CD8-positive, alpha-beta T cell (primary cell): ENCODE measurements at regions of chr5 and their contacts with region 1.

Region 1: DNA sequence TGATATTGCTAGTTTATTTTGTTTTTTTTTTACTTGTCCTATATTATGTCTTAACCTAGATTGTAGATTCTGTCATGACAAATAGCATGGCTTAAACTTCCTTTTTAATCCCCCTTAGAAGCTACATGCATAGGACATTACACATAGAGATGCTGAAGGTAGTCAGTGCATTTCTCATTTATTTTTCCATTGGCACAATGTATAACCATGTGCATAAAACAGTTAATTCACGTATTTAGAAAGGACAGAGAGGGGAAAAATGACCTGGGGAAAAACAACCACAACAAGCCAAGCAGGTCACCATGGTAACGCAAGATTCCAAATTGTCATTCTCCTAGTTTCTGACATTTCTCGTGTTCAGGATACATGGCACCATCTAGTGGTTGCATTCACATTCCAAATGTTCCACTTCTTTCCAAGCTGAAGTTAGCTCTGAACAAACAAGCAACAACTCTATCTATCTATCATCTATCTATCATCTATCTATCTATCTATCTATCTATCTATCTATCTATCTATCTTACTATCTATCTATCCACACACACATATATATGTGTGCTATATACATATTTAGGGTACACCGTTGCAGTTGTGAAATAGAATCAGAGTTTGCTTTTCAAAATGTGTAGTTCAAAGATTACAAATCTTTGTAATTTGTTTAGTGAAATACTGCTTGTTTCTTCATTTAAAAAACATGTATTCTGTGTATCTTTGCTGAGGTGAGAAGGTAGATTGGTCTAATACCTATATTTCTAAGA is 487.2 kb upstream of the ST8SIA4 start:
- DNase-seq: peak in 2 of 9 experiments; percentile 22 to 33
- ATAC-seq: no peak
- H3K4me3 ChIP-seq: no peak overlapping the region
- H3K4me3 Mint-ChIP-seq: no peak overlapping the region
- H3K27ac ChIP-seq: no peak overlapping the region
- H3K27ac Mint-ChIP-seq: no peak overlapping the region
- H3K4me1 ChIP-seq: no peaks in the 10 kb centered on the region
- H3K4me1 Mint-ChIP-seq: no peaks in the 10 kb centered on the region
- H3K27me3 ChIP-seq: no peaks in the 10 kb centered on the region
- H3K27me3 Mint-ChIP-seq: no peaks in the 10 kb centered on the region
- CTCF ChIP-seq: peak; percentile 36

Region 2: DNA sequence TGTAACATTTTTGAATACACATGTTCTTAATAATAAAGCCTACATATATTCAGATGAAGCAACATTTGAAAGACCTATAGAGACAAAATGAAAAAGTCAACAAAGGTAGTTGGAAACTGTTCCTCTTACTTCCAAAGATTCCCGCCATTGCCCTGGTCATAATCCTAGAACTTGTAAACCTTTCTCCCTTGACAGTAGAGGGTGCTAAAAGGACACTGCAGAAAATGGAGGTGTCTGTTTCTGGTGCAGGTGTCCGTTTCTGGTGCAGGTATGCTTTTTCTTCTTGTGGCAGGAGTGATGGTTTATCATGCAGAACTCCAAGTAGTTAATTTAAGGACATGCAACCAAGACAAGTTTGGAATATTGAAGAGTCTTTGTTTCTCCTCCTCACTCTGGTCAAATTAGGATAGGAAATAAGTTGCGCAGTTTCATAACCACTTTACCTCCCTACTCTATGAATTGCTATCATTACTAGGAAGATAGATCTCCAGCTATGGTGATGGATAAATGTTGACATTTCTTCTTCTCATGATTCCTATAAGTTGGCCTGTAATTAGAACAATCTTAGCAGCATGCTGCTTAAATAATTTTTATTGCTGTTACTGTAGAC is 911.1 kb before region 1 on chr5:
- CTCF ChIA-PET with region 1: no interaction called
- POLR2A ChIA-PET with region 1: no interaction called
- intact Hi-C with region 1: loop called (anchors 1 to 5 kb)
- DNase-seq: peak in 2 of 9 experiments; percentile 32 to 47
- ATAC-seq: no peak
- H3K4me3 ChIP-seq: no peak overlapping the region
- H3K4me3 Mint-ChIP-seq: no peak overlapping the region
- H3K27ac ChIP-seq: no peak overlapping the region
- H3K27ac Mint-ChIP-seq: no peak overlapping the region
- H3K4me1 ChIP-seq: no peaks in the 10 kb centered on the region
- H3K4me1 Mint-ChIP-seq: no peaks in the 10 kb centered on the region
- H3K27me3 ChIP-seq: no peaks in the 10 kb centered on the region
- H3K27me3 Mint-ChIP-seq: no peaks in the 10 kb centered on the region
- CTCF ChIP-seq: peak; percentile 32

Region 3: GRCh38 chr5:101440173-101440572 is 49.8 kb after region 1 on chr5:
- CTCF ChIA-PET with region 1: no interaction called
- POLR2A ChIA-PET with region 1: no interaction called
- intact Hi-C with region 1: loop called in 1 of 2 experiments (anchors 2 kb)
- DNase-seq: no peak
- ATAC-seq: no peak
- H3K4me3 ChIP-seq: no peak overlapping the region
- H3K4me3 Mint-ChIP-seq: no peak overlapping the region
- H3K27ac ChIP-seq: no peak overlapping the region
- H3K27ac Mint-ChIP-seq: no peak overlapping the region
- H3K4me1 ChIP-seq: no peaks in the 10 kb centered on the region
- H3K4me1 Mint-ChIP-seq: no peaks in the 10 kb centered on the region
- H3K27me3 ChIP-seq: no peaks in the 10 kb centered on the region
- H3K27me3 Mint-ChIP-seq: no peaks in the 10 kb centered on the region
- CTCF ChIP-seq: no peak